ENCODE measurements at regions of chr14 and their contacts with region 1.

Region 1: GRCh38 chr14:81269100-81269978 is 48.6 kb upstream of the GTF2A1 start:
- DNase-seq: no peak
- ATAC-seq: peak in 3 of 4 donors; percentile 65 to 87 (median 69)
- H3K4me3 ChIP-seq: no peak overlapping the region
- H3K27ac ChIP-seq: no peak overlapping the region
- H3K4me1 ChIP-seq: peaks cover 0 to 18% (median 0%) of the 10 kb centered on the region in 12 donors
- H3K27me3 ChIP-seq: peaks cover 0 to 8% (median 0%) of the 10 kb centered on the region in 9 donors
- CTCF ChIP-seq: peak; percentile 54 to 83 (median 74)
- POLR2A ChIP-seq: no peak

Region 2: GRCh38 chr14:81453166-81453766 is 183.9 kb after region 1 on chr14:
- intact Hi-C with region 1: loop called (anchors 1 to 5 kb)
- DNase-seq: peak in 3 of 5 donors; percentile 33 to 49 (median 37)
- ATAC-seq: peak in 1 of 4 donors; percentile 30
- H3K4me3 ChIP-seq: peak overlapping the region in 1 of 12 donors; percentile 34
- H3K27ac ChIP-seq: peak overlapping the region in 2 of 12 donors; percentile 3 to 25
- H3K4me1 ChIP-seq: peaks cover 0 to 34% (median 6%) of the 10 kb centered on the region in 12 donors
- H3K27me3 ChIP-seq: peaks cover 0 to 18% (median 0%) of the 10 kb centered on the region in 9 donors
- CTCF ChIP-seq: peak; percentile 72 to 87 (median 80)
- POLR2A ChIP-seq: no peak

Region 3: DNA sequence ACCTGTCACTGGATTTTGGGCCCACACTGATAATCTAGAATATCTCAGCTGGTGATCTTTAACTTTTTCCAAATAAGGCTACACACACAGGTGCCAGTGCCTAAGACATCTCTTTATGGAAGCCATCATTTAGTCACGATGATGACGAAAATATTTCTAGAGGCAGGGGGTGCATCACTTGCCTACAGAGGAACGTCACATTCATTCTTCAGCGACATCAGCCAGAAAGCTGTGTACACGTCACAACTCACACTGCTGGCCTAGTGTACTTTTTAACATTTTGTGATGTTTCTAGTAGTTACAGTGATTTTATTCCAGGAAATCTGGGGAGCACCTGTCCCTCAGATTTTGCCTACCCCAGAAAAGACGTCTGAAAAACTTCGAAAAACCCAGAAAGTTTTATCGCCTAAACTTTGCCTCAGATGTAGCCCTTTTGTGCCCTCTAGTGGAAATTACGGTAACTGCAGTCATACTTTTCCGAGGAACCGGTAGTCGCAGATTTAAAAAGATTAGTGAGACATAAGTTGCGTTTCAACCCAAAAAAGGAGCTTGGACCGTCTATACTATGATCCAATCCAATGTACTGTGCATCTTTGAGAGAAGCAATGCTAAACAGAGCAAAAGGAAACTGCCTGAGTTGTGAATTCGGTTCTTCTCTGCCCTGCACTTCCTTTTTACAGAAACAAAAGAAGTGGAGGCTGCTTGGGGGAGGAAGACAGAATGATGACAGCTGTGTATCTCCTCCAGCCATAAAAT is 195.1 kb after region 1 on chr14:
- intact Hi-C with region 1: loop called in 5 of 10 experiments (anchors 1 to 5 kb)
- DNase-seq: peak in 2 of 5 donors; percentile 35 to 53
- ATAC-seq: peak in 3 of 4 donors; percentile 38 to 58 (median 53)
- H3K4me3 ChIP-seq: peak overlapping the region in 11 of 12 donors; percentile 32 to 64 (median 49)
- H3K27ac ChIP-seq: peak overlapping the region in 5 of 12 donors; percentile 13 to 76 (median 23)
- H3K4me1 ChIP-seq: peaks cover 0 to 7% (median 0%) of the 10 kb centered on the region in 12 donors
- H3K27me3 ChIP-seq: no peaks in the 10 kb centered on the region
- CTCF ChIP-seq: peak; percentile 84 to 94 (median 92)
- POLR2A ChIP-seq: no peak

Measured in heart left ventricle (tissue), 16 donors.